CD14-positive monocyte (primary cell): ENCODE measurements at regions of chr13 and their contacts with region 1.

Region 1: DNA sequence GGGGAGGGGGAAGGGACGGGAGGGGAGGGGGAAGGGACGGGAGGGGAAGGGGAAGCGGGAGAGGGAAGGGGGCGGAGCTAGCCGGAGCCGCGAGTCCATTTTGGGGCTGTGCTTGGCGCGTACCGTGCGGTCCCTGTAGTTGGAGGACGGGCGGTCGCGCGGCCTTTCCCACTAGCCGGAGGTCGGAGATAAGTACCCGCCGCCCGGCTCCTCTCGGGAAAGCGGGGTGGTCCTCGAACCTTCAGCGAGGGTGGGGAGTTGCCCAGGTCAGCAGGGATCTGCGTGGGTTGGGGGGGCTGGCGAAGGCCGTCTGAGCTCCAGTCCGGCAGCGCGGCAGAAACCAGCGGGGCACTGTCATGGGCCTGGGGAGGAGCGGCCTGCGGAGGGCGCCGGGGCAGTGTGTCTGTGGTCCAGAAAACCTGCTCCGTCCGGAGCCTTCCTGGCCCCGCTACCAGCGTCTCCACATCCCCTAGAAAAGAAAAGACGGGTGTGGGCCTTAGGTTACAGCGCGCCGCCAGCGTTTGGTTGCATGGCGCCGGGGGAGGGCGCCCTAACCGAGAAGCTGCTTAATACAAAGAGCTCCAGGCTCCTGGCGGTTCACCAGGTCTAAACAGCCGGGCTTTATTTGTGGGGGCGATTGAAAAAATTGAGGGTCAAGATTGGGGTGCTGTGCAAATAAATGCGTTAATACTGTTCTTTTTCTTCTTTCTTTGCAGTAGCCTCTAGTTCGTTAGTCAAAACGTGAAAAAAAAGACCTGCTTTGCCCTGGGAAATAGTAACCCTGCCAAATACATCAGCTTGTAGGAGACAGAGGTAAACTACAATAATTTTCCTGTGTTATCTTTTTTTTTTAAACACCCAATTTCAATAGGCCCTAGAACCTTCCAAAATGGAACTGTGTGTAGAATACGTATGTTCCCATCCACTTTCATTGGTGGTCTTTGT is at the start of gene TRIM13:
- DNase-seq: peak; percentile 77 to 82 (median 80)
- H3K4me3 ChIP-seq: peak within 1 kb of the TSS; percentile 85 to 95 (median 86)
- H3K4me3 Mint-ChIP-seq: peak within 1 kb of the TSS; percentile 85 to 90
- H3K27ac ChIP-seq: peak within 1 kb of the TSS; percentile 95 to 100
- H3K27ac Mint-ChIP-seq: peak within 1 kb of the TSS; percentile 89 to 96 (median 95)
- H3K4me1 ChIP-seq: peaks cover 34 to 47% of the 10 kb centered on the region in 2 donors
- H3K4me1 Mint-ChIP-seq: peaks cover 38% of the 10 kb centered on the region
- H3K27me3 ChIP-seq: no peaks in the 10 kb centered on the region
- H3K27me3 Mint-ChIP-seq: no peaks in the 10 kb centered on the region
- CTCF ChIP-seq: peak; percentile 75
- polyA plus RNA-seq, gene TRIM13: 5.8 to 14.1 (median 6.1) TPM

Region 2: DNA sequence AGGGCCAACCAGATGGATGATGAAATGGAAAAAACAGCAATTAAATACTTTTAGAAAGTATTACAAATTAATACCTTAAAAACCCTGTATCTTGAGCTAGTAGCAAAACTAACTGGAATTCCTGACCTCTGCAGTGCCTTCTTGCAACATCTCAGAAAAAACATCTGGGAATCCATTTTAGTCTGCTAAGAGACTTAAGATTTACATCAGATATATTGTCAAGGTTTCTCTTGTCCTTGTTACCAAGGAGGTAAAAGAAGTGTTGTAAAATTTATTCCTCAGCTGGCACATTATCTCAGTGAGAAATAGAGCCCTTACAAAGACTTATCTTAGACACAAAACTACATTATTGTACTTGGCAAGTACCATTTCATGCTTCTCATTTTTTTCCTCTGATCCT is 36.5 kb after region 1 on chr13:
- intact Hi-C with region 1: no loop called
- DNase-seq: peak in 1 of 3 donors; percentile 5
- H3K4me3 ChIP-seq: no peak overlapping the region
- H3K4me3 Mint-ChIP-seq: no peak overlapping the region
- H3K27ac ChIP-seq: peak overlapping the region in 1 of 2 donors; percentile 56
- H3K27ac Mint-ChIP-seq: no peak overlapping the region
- H3K4me1 ChIP-seq: no peaks in the 10 kb centered on the region
- H3K4me1 Mint-ChIP-seq: peaks cover 2% of the 10 kb centered on the region
- H3K27me3 ChIP-seq: no peaks in the 10 kb centered on the region
- H3K27me3 Mint-ChIP-seq: no peaks in the 10 kb centered on the region
- CTCF ChIP-seq: no peak

Region 3: GRCh38 chr13:50081679-50082425 is 84.6 kb after region 1 on chr13:
- intact Hi-C with region 1: loop called in 1 of 2 experiments (anchors 5 kb)
- DNase-seq: peak; percentile 97 to 99 (median 97)
- H3K4me3 ChIP-seq: peak overlapping the region; percentile 79 to 94 (median 91)
- H3K4me3 Mint-ChIP-seq: peak overlapping the region; percentile 99 to 100
- H3K27ac ChIP-seq: peak overlapping the region; percentile 80 to 85
- H3K27ac Mint-ChIP-seq: peak overlapping the region; percentile 90 to 98 (median 95)
- H3K4me1 ChIP-seq: peaks cover 49 to 74% of the 10 kb centered on the region in 2 donors
- H3K4me1 Mint-ChIP-seq: peaks cover 50% of the 10 kb centered on the region
- H3K27me3 ChIP-seq: no peaks in the 10 kb centered on the region
- H3K27me3 Mint-ChIP-seq: no peaks in the 10 kb centered on the region
- CTCF ChIP-seq: no peak

Region 4: DNA sequence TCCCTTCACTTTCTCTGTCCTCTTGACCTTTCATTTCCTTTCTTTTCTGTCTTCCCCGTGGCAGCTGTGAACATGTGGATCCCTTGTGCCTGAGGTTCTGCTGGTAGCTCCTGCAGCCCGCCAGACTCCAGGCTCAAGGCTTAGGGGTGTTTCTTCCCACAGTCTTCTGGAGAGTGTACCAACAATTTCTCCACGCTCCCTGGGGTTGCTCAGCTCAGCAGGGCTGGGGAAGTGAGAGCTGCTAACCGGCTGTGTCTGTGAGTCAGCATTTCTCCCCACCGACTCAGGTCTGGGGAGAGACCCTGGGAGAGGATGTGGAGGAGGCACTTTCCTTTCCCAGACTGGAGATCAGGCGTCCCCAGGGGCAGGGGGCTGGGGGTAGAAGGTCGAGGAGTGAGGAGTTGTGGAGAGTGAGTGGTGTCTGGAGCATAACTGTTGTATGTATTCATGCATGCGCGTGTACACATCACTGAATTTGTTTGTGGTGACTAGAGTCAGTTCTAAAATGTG is 211.7 kb after region 1 on chr13:
- intact Hi-C with region 1: loop called in 1 of 2 experiments (anchors 10 kb)
- DNase-seq: peak; percentile 78 to 89 (median 86)
- H3K4me3 ChIP-seq: peak overlapping the region; percentile 53 to 80 (median 57)
- H3K4me3 Mint-ChIP-seq: peak overlapping the region; percentile 89 to 98
- H3K27ac ChIP-seq: peak overlapping the region; percentile 93 to 94
- H3K27ac Mint-ChIP-seq: peak overlapping the region; percentile 95 to 100 (median 98)
- H3K4me1 ChIP-seq: peaks cover 25 to 31% of the 10 kb centered on the region in 2 donors
- H3K4me1 Mint-ChIP-seq: peaks cover 33% of the 10 kb centered on the region
- H3K27me3 ChIP-seq: no peaks in the 10 kb centered on the region
- H3K27me3 Mint-ChIP-seq: no peaks in the 10 kb centered on the region
- CTCF ChIP-seq: no peak

Region 5: GRCh38 chr13:50635504-50635903 is 638.3 kb after region 1 on chr13:
- intact Hi-C with region 1: loop called in 1 of 2 experiments (anchors 10 kb)
- DNase-seq: peak; percentile 98 to 100 (median 99)
- H3K4me3 ChIP-seq: no peak overlapping the region
- H3K4me3 Mint-ChIP-seq: peak overlapping the region in 1 of 2 donors; percentile 46
- H3K27ac ChIP-seq: peak overlapping the region; percentile 100
- H3K27ac Mint-ChIP-seq: peak overlapping the region; percentile 95 to 100 (median 99)
- H3K4me1 ChIP-seq: peaks cover 48 to 60% of the 10 kb centered on the region in 2 donors
- H3K4me1 Mint-ChIP-seq: peaks cover 49% of the 10 kb centered on the region
- H3K27me3 ChIP-seq: no peaks in the 10 kb centered on the region
- H3K27me3 Mint-ChIP-seq: no peaks in the 10 kb centered on the region
- CTCF ChIP-seq: no peak

Region 6: GRCh38 chr13:50911937-50912795 is 914.9 kb after region 1 on chr13:
- intact Hi-C with region 1: loop called (anchors 5 kb)
- DNase-seq: peak; percentile 62 to 80 (median 73)
- H3K4me3 ChIP-seq: peak overlapping the region in 1 of 3 experiments; percentile 92
- H3K4me3 Mint-ChIP-seq: peak overlapping the region; percentile 56 to 72
- H3K27ac ChIP-seq: peak overlapping the region in 1 of 2 donors; percentile 98
- H3K27ac Mint-ChIP-seq: peak overlapping the region; percentile 4 to 89 (median 67)
- H3K4me1 ChIP-seq: peaks cover 53 to 72% of the 10 kb centered on the region in 2 donors
- H3K4me1 Mint-ChIP-seq: peaks cover 58% of the 10 kb centered on the region
- H3K27me3 ChIP-seq: no peaks in the 10 kb centered on the region
- H3K27me3 Mint-ChIP-seq: no peaks in the 10 kb centered on the region
- CTCF ChIP-seq: peak; percentile 88